Activated CD4-positive, alpha-beta T cell treated with anti-CD3 and anti-CD28 coated beads for 36 hours (primary cell): ENCODE measurements at regions of chrX and their contacts with region 1.

Region 1: GRCh38 chrX:6021316-6022091 is 207.2 kb downstream of the NLGN4X start:
- DNase-seq: peak; percentile 48
- ATAC-seq: no peak
- H3K4me3 Mint-ChIP-seq: no peak overlapping the region
- H3K27ac Mint-ChIP-seq: no peak overlapping the region
- H3K4me1 Mint-ChIP-seq: peaks cover 4% of the 10 kb centered on the region
- H3K27me3 Mint-ChIP-seq: peaks cover 3% of the 10 kb centered on the region

Region 2: GRCh38 chrX:6225911-6226595 is 204.5 kb after region 1 on chrX:
- CTCF ChIA-PET with region 1: interaction called, 4 read pairs
- POLR2A ChIA-PET with region 1: no interaction called
- intact Hi-C with region 1: loop called (anchors 2 to 5 kb)
- DNase-seq: peak; percentile 7
- ATAC-seq: peak; percentile 36
- H3K4me3 Mint-ChIP-seq: peak overlapping the region; percentile 52
- H3K27ac Mint-ChIP-seq: no peak overlapping the region
- H3K4me1 Mint-ChIP-seq: peaks cover 7% of the 10 kb centered on the region
- H3K27me3 Mint-ChIP-seq: peaks cover 21% of the 10 kb centered on the region

Region 3: GRCh38 chrX:6813836-6814370 is 792.4 kb after region 1 on chrX:
- CTCF ChIA-PET with region 1: no interaction called
- POLR2A ChIA-PET with region 1: no interaction called
- intact Hi-C with region 1: no loop called
- DNase-seq: peak; percentile 4
- ATAC-seq: no peak
- H3K4me3 Mint-ChIP-seq: no peak overlapping the region
- H3K27ac Mint-ChIP-seq: no peak overlapping the region
- H3K4me1 Mint-ChIP-seq: no peaks in the 10 kb centered on the region
- H3K27me3 Mint-ChIP-seq: no peaks in the 10 kb centered on the region

Region 4: GRCh38 chrX:7088968-7089615 is 1067.6 kb after region 1 on chrX:
- CTCF ChIA-PET with region 1: no interaction called
- POLR2A ChIA-PET with region 1: no interaction called
- intact Hi-C with region 1: loop called in 1 of 2 experiments (anchors 5 kb)
- DNase-seq: peak; percentile 58
- ATAC-seq: peak; percentile 37
- H3K4me3 Mint-ChIP-seq: no peak overlapping the region
- H3K27ac Mint-ChIP-seq: peak overlapping the region; percentile 39
- H3K4me1 Mint-ChIP-seq: peaks cover 46% of the 10 kb centered on the region
- H3K27me3 Mint-ChIP-seq: peaks cover 6% of the 10 kb centered on the region

Region 5: DNA sequence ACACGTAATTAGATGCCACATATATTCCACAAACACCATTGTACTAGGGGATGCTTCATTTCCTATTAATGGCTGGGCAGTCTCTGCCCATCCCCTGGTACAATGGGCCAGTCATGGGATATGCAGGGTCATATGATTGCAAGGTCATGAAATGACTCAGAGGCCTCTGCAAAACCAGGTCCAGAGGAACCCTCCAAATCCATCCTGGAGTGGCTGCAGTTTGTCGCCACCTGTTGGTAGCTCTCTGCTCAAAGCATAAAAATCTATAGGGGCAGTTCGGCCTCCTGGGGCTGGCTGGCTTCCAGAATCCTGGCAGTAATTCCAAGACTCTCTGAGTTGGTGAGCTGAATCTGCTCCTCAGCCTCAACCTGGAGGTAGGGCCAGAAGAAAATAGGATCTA is 1149.4 kb after region 1 on chrX:
- CTCF ChIA-PET with region 1: no interaction called
- POLR2A ChIA-PET with region 1: no interaction called
- intact Hi-C with region 1: loop called in 1 of 2 experiments (anchors 10 kb)
- DNase-seq: peak; percentile 54
- ATAC-seq: no peak
- H3K4me3 Mint-ChIP-seq: no peak overlapping the region
- H3K27ac Mint-ChIP-seq: no peak overlapping the region
- H3K4me1 Mint-ChIP-seq: no peaks in the 10 kb centered on the region
- H3K27me3 Mint-ChIP-seq: no peaks in the 10 kb centered on the region

Region 6: GRCh38 chrX:7925867-7926472 is 1904.5 kb after region 1 on chrX:
- CTCF ChIA-PET with region 1: no interaction called
- POLR2A ChIA-PET with region 1: no interaction called
- intact Hi-C with region 1: loop called in 1 of 2 experiments (anchors 1 kb)
- DNase-seq: peak; percentile 71
- ATAC-seq: peak; percentile 40
- H3K4me3 Mint-ChIP-seq: peak overlapping the region; percentile 80
- H3K27ac Mint-ChIP-seq: peak overlapping the region; percentile 42
- H3K4me1 Mint-ChIP-seq: peaks cover 13% of the 10 kb centered on the region
- H3K27me3 Mint-ChIP-seq: no peaks in the 10 kb centered on the region